KBM-7 (cell line): ENCODE measurements at regions of chr7 and their contacts with region 1.

Region 1: DNA sequence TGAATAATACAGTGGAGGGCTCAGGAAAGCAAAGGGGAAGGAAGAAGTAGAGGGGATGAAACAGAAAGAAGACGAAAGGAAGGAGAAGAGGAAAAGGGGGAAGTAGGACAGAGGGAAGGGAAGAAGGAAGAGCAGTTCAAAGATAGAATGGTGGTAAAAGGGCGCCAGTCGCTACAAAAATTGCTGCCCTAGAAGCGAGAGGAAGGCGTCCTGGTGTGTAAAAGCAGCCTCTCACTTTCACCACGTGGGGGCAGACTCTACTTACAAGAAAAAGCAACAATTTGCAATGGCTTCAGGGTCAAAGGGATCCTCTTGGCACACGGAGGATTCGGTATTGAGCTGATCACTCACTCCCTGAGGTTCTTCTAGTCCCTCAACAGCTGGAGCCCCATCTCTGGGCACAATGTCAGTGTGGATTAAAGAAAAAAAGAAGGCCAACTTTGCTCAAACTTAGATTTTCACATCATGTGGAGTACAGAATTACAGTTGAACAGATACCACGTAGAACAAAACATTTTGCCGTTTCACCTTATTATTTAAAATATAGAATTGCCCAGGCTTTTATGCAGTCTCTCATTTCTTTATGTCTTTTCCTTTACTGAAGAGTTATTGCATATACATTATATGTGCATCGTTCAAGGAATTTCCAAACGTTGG is 31.4 kb upstream of the NPVF start:
- DNase-seq: peak; percentile 82

Region 2: GRCh38 chr7:25359471-25360059 is 99.8 kb after region 1 on chr7:
- in situ Hi-C with region 1: no loop called
- DNase-seq: no peak

Region 3: GRCh38 chr7:25389489-25390106 is 129.9 kb after region 1 on chr7:
- in situ Hi-C with region 1: loop called (anchors 10 kb)
- DNase-seq: peak; percentile 64

Region 4: GRCh38 chr7:25565949-25566348 is 306.2 kb after region 1 on chr7:
- in situ Hi-C with region 1: loop called (anchors 25 kb)
- DNase-seq: peak; percentile 89